ENCODE measurements at regions of chr10 and their contacts with region 1.

Region 1: GRCh38 chr10:68423522-68423921 is 16.4 kb upstream of the RUFY2 start:
- DNase-seq: no peak
- ATAC-seq: no peak
- H3K4me3 ChIP-seq: no peak overlapping the region
- H3K27ac ChIP-seq: no peak overlapping the region
- H3K4me1 ChIP-seq: no peaks in the 10 kb centered on the region
- H3K27me3 ChIP-seq: no peaks in the 10 kb centered on the region
- CTCF ChIP-seq: no peak
- EP300 ChIP-seq: no peak
- POLR2A ChIP-seq: no peak
- RAD21 ChIP-seq: no peak

Region 2: DNA sequence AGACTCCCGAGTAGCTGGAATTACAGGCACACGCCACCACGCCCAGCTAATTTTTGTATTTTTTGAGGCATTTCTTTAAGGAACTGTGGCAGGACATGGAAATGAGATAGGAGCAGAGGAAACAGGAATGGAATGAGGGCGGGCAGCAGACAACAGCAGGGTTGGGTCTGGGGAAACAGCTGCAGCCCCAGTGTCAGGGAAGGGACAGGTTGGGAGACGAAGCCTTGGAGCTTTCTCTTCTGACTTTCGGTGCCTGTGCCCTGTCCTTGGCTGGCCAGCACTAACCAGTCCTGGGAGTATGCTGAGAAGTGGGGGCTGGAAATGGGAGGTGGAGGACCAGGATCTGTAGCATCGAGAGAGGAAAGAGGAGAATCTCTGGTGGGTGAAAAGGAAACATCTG is 239.0 kb before region 1 on chr10:
- CTCF ChIA-PET with region 1: no interaction called
- POLR2A ChIA-PET with region 1: no interaction called
- in situ Hi-C with region 1: no loop called
- intact Hi-C with region 1: no loop called
- DNase-seq: no peak
- ATAC-seq: no peak
- H3K4me3 ChIP-seq: no peak overlapping the region
- H3K27ac ChIP-seq: no peak overlapping the region
- H3K4me1 ChIP-seq: no peaks in the 10 kb centered on the region
- H3K27me3 ChIP-seq: peaks cover 9 to 12% of the 10 kb centered on the region in 2 experiments; a peak in 3 of 5 replicates
- CTCF ChIP-seq: no peak
- EP300 ChIP-seq: no peak
- POLR2A ChIP-seq: no peak
- RAD21 ChIP-seq: no peak

Region 3: DNA sequence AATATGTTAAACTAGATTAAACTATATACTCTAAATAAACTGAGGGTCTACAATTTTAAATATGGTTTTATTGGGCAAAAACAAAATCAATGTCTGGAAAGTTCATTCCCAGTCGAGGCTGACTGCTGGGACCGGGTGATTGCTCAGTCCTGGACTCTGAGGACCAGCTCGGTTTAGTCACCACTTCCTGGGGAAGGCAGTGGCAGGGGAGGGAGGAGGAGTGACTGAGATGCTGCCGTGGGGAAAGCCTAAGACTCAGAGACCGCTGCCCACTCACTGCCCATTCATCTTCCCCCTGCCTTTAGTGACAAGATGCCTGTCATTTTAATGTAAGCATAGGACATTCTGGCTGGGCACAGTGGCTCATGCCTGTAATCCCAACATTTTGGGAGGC is 220.6 kb before region 1 on chr10:
- CTCF ChIA-PET with region 1: no interaction called
- POLR2A ChIA-PET with region 1: no interaction called
- in situ Hi-C with region 1: no loop called
- intact Hi-C with region 1: no loop called
- DNase-seq: no peak
- ATAC-seq: peak; percentile 26; the same call in 1 of the 3 replicates
- H3K4me3 ChIP-seq: no peak overlapping the region
- H3K27ac ChIP-seq: no peak overlapping the region
- H3K4me1 ChIP-seq: no peaks in the 10 kb centered on the region
- H3K27me3 ChIP-seq: peaks cover 26 to 43% of the 10 kb centered on the region in 2 experiments; a peak in 4 of 5 replicates
- CTCF ChIP-seq: no peak
- EP300 ChIP-seq: no peak
- POLR2A ChIP-seq: no peak
- RAD21 ChIP-seq: no peak

Region 4: DNA sequence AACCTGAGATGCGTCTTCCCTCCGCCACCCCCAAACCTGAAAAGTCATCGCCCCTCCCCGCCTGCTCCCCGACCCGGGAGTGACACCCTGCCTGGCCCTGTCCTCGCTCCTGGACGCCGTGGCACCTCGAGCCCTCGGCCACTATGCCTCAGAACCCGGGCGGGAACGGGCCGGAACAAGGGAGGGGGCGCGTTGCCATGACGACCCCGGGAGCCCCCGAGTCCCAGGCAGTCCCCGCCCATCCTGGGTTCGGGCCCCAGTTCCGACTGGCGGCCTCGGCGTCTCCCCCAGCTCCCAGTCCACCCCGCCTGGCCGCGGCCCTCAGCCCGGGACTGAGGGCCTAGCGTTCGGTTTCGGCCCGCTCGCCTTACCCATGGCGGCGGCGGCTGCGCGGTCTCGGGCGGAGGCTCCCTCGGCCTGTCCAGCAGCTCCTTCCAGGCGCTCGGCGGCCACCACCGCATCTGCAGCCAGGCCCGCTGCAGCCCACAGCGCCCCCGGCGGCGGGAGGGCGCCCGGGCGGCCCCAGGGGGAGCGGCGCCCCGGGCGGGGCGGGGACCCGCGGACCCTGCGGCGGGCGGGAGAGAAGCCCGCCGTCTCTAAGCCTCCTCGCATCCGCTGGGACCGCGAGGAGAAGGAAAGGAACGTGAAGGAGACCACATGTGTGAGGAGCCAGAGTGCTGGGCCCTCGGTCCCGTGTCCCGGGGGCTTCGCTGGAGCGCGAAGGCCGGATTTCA is 16.5 kb before region 1 on chr10 and contains the start of gene RUFY2:
- CTCF ChIA-PET with region 1: no interaction called
- POLR2A ChIA-PET with region 1: interaction called, 12 read pairs
- in situ Hi-C with region 1: no loop called
- intact Hi-C with region 1: no loop called
- DNase-seq: peak; percentile 91 to 96 (median 94)
- ATAC-seq: peak; percentile 96
- H3K4me3 ChIP-seq: peak within 1 kb of the TSS; percentile 97
- H3K27ac ChIP-seq: peak within 1 kb of the TSS; percentile 91
- H3K4me1 ChIP-seq: peaks cover 14 to 25% of the 10 kb centered on the region in 2 experiments; a peak in 4 of 5 replicates
- H3K27me3 ChIP-seq: no peaks in the 10 kb centered on the region
- CTCF ChIP-seq: peak; percentile 69 to 95 (median 77)
- EP300 ChIP-seq: no peak
- POLR2A ChIP-seq: peak; percentile 88
- RAD21 ChIP-seq: peak; percentile 20 to 24; a peak in 2 of 4 replicates
- polyA plus RNA-seq, gene RUFY2: 3.7 to 4.5 TPM

Region 5: DNA sequence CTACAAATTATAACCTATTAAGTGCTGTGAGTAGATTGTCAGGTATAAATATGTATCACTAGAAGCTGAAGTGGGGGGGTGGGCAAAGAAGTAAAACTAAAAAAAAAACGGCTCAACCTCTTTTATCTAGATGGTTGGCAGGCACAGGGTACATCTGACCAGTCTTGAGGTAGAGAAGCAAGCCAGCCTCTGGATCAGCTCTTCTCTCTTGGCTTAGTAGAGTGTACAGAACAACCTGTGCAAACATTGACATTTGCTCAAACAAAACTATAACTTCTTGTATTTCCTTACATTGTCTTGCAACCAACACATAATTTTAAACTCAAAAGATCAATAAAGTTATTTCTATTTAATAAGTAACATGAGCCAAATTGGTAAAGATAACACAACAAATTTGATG is 22.7 kb after region 1 on chr10:
- CTCF ChIA-PET with region 1: no interaction called
- POLR2A ChIA-PET with region 1: interaction called, 5 read pairs
- in situ Hi-C with region 1: no loop called
- intact Hi-C with region 1: loop called (anchors 1 kb)
- DNase-seq: no peak
- ATAC-seq: no peak
- H3K4me3 ChIP-seq: no peak overlapping the region
- H3K27ac ChIP-seq: no peak overlapping the region
- H3K4me1 ChIP-seq: no peaks in the 10 kb centered on the region
- H3K27me3 ChIP-seq: no peaks in the 10 kb centered on the region
- CTCF ChIP-seq: no peak
- EP300 ChIP-seq: no peak
- POLR2A ChIP-seq: no peak
- RAD21 ChIP-seq: no peak

Region 6: GRCh38 chr10:68572151-68572550 is 148.6 kb after region 1 on chr10:
- CTCF ChIA-PET with region 1: no interaction called
- POLR2A ChIA-PET with region 1: no interaction called
- in situ Hi-C with region 1: no loop called
- intact Hi-C with region 1: no loop called
- DNase-seq: no peak
- ATAC-seq: no peak
- H3K4me3 ChIP-seq: no peak overlapping the region
- H3K27ac ChIP-seq: no peak overlapping the region
- H3K4me1 ChIP-seq: no peaks in the 10 kb centered on the region
- H3K27me3 ChIP-seq: no peaks in the 10 kb centered on the region
- CTCF ChIP-seq: no peak
- EP300 ChIP-seq: no peak
- POLR2A ChIP-seq: no peak
- RAD21 ChIP-seq: no peak

Region 7: GRCh38 chr10:68861253-68861652 is 437.7 kb after region 1 on chr10:
- CTCF ChIA-PET with region 1: no interaction called
- POLR2A ChIA-PET with region 1: no interaction called
- in situ Hi-C with region 1: no loop called
- intact Hi-C with region 1: no loop called
- DNase-seq: peak in 1 of 4 experiments; percentile 34
- ATAC-seq: no peak
- H3K4me3 ChIP-seq: no peak overlapping the region
- H3K27ac ChIP-seq: no peak overlapping the region
- H3K4me1 ChIP-seq: no peaks in the 10 kb centered on the region
- H3K27me3 ChIP-seq: no peaks in the 10 kb centered on the region
- CTCF ChIP-seq: no peak
- EP300 ChIP-seq: no peak
- POLR2A ChIP-seq: no peak
- RAD21 ChIP-seq: no peak